Heart right ventricle (tissue), 16 donors: ENCODE measurements at regions of chr10 and their contacts with region 1.

Region 1: DNA sequence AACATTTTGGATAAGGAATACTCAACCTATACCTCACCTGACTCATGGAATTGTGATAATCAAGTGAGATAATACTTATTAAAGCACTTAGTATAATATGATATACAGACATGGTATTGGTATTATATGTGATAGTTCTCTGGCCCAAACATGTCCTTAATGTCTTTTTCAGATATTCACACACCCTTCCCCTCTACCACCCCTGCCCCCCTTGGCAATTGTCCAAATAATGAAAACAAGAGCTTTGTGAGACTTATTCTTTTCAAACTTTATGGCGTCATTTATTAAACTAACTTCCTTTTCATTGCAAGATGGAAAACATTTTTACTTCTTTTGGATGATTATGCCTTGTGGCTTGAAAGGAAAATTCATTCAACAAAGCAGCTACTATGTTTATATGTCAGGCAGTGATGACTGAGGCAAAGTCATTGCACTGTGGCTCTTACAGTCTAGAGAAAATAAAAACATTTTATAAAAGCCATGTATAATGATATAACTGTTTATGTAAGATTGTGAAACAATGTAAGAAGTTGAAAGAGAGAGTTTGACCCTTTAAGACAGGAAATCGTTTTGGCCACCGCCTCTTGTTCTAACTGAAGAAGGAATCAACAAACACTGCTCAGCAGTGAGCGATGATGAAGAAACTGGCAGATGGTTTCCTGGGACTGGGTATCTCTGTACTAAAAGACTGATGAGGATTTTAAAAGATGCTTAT is 27.4 kb downstream of the MINPP1 start:
- DNase-seq: no peak
- ATAC-seq: peak in 7 of 8 donors; percentile 44 to 85 (median 72)
- H3K4me3 ChIP-seq: peak overlapping the region in 1 of 10 donors; percentile 3
- H3K27ac ChIP-seq: peak overlapping the region; percentile 6 to 73 (median 58)
- H3K4me1 ChIP-seq: peaks cover 0 to 29% (median 18%) of the 10 kb centered on the region in 9 donors
- H3K27me3 ChIP-seq: no peaks in the 10 kb centered on the region
- CTCF ChIP-seq: no peak

Region 2: DNA sequence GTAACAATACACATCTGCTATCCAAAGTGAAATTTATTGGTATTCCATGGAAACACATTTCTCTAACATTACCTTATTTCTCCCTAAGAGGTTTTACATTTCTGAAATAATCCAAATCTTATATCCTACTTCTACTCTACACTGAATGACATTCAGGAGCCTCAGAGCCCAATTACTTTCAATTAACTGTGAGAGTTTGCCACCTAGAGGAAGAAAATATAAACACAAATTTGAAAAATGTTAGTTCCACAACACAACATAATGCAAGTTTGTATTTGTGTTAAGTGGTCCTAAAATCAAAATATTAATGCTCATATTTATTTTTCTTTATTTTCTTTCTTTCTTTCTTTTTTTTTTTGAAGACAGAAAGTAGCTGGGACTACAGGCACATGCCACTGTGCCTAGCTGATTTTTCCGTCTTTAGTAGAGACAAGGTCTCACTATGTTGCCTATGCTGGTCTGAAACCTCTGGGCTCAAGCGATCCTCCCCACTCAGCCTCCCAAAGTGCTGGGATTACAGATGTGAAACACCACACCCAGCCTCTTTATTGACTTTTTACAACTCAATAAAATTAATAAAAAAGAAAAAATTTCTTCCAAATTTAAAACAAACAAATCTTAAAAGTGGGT is 239.9 kb after region 1 on chr10:
- intact Hi-C with region 1: loop called in 3 of 10 experiments (anchors 5 to 10 kb)
- DNase-seq: no peak
- ATAC-seq: no peak
- H3K4me3 ChIP-seq: no peak overlapping the region
- H3K27ac ChIP-seq: no peak overlapping the region
- H3K4me1 ChIP-seq: peaks cover 0 to 9% (median 0%) of the 10 kb centered on the region in 9 donors
- H3K27me3 ChIP-seq: no peaks in the 10 kb centered on the region
- CTCF ChIP-seq: peak in 8 of 9 donors; percentile 30 to 72 (median 58)

Region 3: GRCh38 chr10:87861566-87861952 is 329.5 kb after region 1 on chr10:
- intact Hi-C with region 1: no loop called
- DNase-seq: peak; percentile 79 to 80
- ATAC-seq: peak; percentile 8 to 83 (median 62)
- H3K4me3 ChIP-seq: peak overlapping the region; percentile 77 to 90 (median 85)
- H3K27ac ChIP-seq: peak overlapping the region; percentile 91 to 99 (median 98)
- H3K4me1 ChIP-seq: peaks cover 0 to 20% (median 16%) of the 10 kb centered on the region in 9 donors
- H3K27me3 ChIP-seq: no peaks in the 10 kb centered on the region
- CTCF ChIP-seq: peak in 5 of 9 donors; percentile 7 to 43 (median 23)

Region 4: DNA sequence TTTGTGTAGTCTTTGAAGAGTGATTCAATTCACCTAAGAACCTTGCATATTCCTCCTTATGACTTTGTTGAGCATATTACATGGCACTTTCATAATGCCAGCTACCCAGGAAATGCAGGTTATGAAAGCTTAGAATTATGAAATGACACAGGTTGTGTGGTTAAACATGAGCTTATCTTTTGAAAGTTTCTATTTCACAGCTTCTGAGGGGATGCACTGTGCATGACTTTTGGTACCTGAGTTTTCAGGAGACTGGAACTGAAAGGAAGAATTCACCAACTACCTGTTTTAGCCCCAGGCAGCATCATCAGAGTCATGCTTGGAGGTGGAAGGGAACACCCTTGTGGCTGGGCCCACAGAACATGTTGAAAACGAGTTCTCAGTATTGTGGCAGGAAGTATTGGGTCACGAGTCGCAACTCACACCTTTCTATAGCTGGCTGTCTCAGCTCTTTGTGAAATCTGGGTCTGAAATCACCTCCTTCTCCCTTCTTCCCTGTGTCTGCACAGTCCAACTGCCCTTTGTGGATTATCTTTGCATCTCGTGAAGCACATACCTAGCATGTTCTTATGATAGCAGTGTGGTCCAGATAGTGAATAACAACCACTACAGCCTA is 559.5 kb after region 1 on chr10:
- intact Hi-C with region 1: no loop called
- DNase-seq: no peak
- ATAC-seq: peak in 4 of 8 donors; percentile 13 to 52 (median 28)
- H3K4me3 ChIP-seq: no peak overlapping the region
- H3K27ac ChIP-seq: peak overlapping the region in 1 of 10 donors; percentile 51
- H3K4me1 ChIP-seq: peaks cover 0 to 43% (median 10%) of the 10 kb centered on the region in 9 donors
- H3K27me3 ChIP-seq: no peaks in the 10 kb centered on the region
- CTCF ChIP-seq: no peak